Activated B cell treated with CpG ODN at 0.5 μM for 24 hours (primary cell): ENCODE measurements at regions of chr9 and their contacts with region 1.

Region 1: DNA sequence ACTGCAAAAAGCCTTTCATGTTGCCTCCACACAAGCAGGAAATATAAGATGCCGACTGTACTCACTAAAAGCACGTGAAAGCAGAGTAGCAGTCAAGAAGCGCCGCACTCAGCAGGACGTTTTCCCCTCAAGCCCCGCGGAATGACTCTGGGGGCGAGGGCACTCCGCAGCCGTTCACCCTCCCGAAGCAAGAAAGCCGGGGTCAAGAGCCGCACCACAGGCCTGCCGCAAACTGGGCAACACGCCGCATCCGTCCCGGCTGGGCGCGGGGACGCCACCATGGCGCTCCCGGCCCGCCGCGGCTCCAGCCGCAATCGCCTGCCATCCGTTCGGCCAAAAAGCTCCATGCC is 364 bp downstream of the RPS6 start:
- DNase-seq: no peak
- ATAC-seq: peak; percentile 37
- H3K4me3 Mint-ChIP-seq: peak overlapping the region; percentile 100
- H3K27ac Mint-ChIP-seq: peak overlapping the region; percentile 99
- H3K4me1 Mint-ChIP-seq: peaks cover 49% of the 10 kb centered on the region
- H3K27me3 Mint-ChIP-seq: no peaks in the 10 kb centered on the region
- CTCF ChIP-seq: no peak

Region 2: DNA sequence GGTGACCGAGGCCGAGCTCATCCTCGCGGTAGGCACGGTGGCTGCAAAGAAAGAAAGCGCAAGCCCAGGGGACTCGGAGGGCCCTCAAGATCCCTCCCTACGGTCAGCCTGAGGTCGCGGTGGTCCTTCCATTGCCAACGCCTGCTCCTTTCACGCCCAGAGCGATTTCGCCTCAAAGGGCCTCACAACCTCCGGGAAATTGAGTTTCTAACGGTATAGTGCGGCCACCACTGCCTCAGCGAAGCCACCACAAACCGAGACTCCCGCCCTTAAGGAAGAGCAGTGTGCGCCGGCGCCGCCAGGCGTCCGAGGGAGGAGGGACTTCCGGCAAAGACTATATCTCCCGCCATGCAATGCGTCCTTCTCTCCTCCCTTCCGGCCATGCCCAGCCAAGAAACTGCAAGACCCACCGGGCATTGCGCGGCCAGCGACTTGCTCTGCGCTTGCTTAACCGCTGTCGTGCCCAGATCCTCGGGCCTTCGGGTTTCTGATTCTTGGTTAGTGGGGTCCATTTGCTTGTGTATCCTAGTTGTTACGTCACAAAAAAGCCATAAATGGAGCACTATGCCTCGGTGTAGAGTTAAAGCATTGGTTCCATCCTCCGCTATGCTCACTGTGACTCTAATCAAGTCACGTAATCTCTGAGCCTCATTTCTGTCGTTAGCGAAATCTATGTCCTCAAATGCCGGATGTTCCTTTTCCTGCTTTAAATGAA is 276.9 kb before region 1 on chr9 and contains the start of gene HAUS6:
- CTCF ChIA-PET with region 1: no interaction called
- POLR2A ChIA-PET with region 1: interaction called, 3 read pairs
- intact Hi-C with region 1: loop called (anchors 1 kb)
- DNase-seq: peak; percentile 86
- ATAC-seq: peak; percentile 94
- H3K4me3 Mint-ChIP-seq: peak within 1 kb of the TSS; percentile 98
- H3K27ac Mint-ChIP-seq: peak within 1 kb of the TSS; percentile 93
- H3K4me1 Mint-ChIP-seq: peaks cover 17% of the 10 kb centered on the region
- H3K27me3 Mint-ChIP-seq: no peaks in the 10 kb centered on the region
- CTCF ChIP-seq: no peak
- total RNA-seq, gene HAUS6: 13.7 and 15.3 TPM in 2 replicates

Region 3: DNA sequence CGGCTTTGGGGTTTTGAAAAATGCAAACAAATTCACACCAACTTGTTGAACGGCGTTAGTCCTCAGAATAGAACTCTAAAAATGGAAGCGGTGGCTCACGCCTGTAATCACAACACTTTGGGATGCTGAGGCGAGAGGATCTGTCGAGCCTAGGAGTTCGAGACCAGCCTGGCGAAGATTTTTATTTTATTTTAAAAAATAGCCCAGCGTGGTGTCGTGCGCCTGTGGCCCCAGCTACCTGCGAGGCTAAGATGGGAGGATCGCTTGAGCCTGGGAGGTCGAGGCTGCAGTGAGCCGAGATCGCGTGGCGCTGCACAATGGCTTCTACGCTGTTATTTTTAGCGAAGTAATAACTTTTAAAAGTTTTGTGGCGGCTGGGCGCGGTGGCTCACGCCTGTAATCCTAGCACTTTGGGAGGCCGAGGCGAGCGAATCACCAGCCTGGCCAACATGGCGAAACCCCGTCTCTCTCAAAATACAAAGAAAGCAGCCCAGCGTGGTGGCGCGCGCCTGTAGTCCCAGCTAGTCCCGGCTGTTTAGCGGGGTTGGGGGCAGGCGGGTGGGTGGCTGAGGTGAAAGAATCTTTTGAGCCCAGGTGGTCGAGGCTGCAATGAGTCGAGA is 251.7 kb before region 1 on chr9:
- CTCF ChIA-PET with region 1: no interaction called
- POLR2A ChIA-PET with region 1: interaction called, 8 read pairs
- intact Hi-C with region 1: loop called (anchors 1 kb)
- DNase-seq: peak; percentile 18
- ATAC-seq: peak; percentile 12
- H3K4me3 Mint-ChIP-seq: peak overlapping the region; percentile 89
- H3K27ac Mint-ChIP-seq: peak overlapping the region; percentile 79
- H3K4me1 Mint-ChIP-seq: peaks cover 29% of the 10 kb centered on the region
- H3K27me3 Mint-ChIP-seq: no peaks in the 10 kb centered on the region
- CTCF ChIP-seq: no peak

Region 4: GRCh38 chr9:19184144-19184917 is 195.3 kb before region 1 on chr9:
- CTCF ChIA-PET with region 1: no interaction called
- POLR2A ChIA-PET with region 1: interaction called, 15 read pairs
- intact Hi-C with region 1: loop called (anchors 5 kb)
- DNase-seq: peak; percentile 26
- ATAC-seq: peak; percentile 98
- H3K4me3 Mint-ChIP-seq: peak overlapping the region; percentile 46
- H3K27ac Mint-ChIP-seq: peak overlapping the region; percentile 94
- H3K4me1 Mint-ChIP-seq: peaks cover 10% of the 10 kb centered on the region
- H3K27me3 Mint-ChIP-seq: no peaks in the 10 kb centered on the region
- CTCF ChIP-seq: no peak

Region 5: GRCh38 chr9:19408693-19409400 is 29.2 kb after region 1 on chr9 and contains the start of gene ACER2:
- CTCF ChIA-PET with region 1: no interaction called
- POLR2A ChIA-PET with region 1: interaction called, 12 read pairs
- intact Hi-C with region 1: loop called (anchors 1 kb)
- DNase-seq: peak; percentile 99
- ATAC-seq: peak; percentile 97
- H3K4me3 Mint-ChIP-seq: peak within 1 kb of the TSS; percentile 94
- H3K27ac Mint-ChIP-seq: peak within 1 kb of the TSS; percentile 69
- H3K4me1 Mint-ChIP-seq: peaks cover 12% of the 10 kb centered on the region
- H3K27me3 Mint-ChIP-seq: no peaks in the 10 kb centered on the region
- CTCF ChIP-seq: no peak
- total RNA-seq, gene ACER2: 1.4 and 2.0 TPM in 2 replicates

Region 6: GRCh38 chr9:19451240-19452087 is 71.8 kb after region 1 on chr9:
- CTCF ChIA-PET with region 1: no interaction called
- POLR2A ChIA-PET with region 1: interaction called, 23 read pairs
- intact Hi-C with region 1: loop called (anchors 1 kb)
- DNase-seq: no peak
- ATAC-seq: peak; percentile 96
- H3K4me3 Mint-ChIP-seq: peak overlapping the region; percentile 85
- H3K27ac Mint-ChIP-seq: peak overlapping the region; percentile 95
- H3K4me1 Mint-ChIP-seq: peaks cover 16% of the 10 kb centered on the region
- H3K27me3 Mint-ChIP-seq: no peaks in the 10 kb centered on the region
- CTCF ChIP-seq: no peak

Region 7: DNA sequence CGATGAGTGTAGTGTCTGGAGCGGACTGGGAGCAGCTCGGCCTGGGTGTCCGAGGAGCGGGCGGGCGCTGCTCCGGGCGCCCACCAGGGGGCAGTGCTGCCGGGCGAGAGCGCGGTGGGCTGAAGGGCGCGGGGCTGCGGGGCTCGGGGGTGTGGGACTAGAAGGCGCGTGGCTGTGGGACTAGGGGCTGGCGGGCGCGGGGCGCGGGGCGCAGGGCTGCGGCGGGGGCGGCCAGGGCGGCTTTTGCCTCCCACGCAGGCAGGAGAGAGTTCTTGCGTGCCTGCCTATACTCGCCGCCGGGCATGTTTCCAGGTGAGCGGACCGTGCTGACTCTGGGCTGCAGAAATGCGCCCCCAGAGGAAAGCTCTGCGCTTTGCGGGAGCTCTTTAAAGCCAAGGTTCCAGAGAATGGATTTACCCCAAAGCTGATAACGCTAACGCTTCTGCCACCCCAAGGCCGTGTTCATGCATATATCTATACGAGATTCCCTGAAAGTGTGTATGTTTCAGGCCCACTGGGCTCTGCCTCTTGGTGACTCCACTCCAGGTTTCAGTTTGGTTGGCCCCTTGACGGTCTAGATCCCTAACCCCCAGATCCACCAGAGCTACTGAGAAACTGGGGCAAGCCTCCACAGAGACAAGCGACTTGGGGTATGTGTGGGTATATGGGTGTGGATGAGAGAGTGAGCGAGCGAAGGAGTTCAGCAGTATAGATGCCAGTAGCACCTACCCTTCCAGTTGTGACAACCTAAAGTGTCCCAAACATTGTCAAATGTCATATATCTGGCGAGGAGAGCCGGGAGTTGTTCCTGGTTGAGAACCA is 85.3 kb after region 1 on chr9:
- CTCF ChIA-PET with region 1: interaction called, 7 read pairs
- POLR2A ChIA-PET with region 1: interaction called, 10 read pairs
- intact Hi-C with region 1: no loop called
- DNase-seq: peak; percentile 77
- ATAC-seq: peak; percentile 93
- H3K4me3 Mint-ChIP-seq: peak overlapping the region; percentile 88
- H3K27ac Mint-ChIP-seq: peak overlapping the region; percentile 69
- H3K4me1 Mint-ChIP-seq: peaks cover 11% of the 10 kb centered on the region
- H3K27me3 Mint-ChIP-seq: no peaks in the 10 kb centered on the region
- CTCF ChIP-seq: peak; percentile 60